ENCODE measurements at regions of chr12 and their contacts with region 1.

Region 1: DNA sequence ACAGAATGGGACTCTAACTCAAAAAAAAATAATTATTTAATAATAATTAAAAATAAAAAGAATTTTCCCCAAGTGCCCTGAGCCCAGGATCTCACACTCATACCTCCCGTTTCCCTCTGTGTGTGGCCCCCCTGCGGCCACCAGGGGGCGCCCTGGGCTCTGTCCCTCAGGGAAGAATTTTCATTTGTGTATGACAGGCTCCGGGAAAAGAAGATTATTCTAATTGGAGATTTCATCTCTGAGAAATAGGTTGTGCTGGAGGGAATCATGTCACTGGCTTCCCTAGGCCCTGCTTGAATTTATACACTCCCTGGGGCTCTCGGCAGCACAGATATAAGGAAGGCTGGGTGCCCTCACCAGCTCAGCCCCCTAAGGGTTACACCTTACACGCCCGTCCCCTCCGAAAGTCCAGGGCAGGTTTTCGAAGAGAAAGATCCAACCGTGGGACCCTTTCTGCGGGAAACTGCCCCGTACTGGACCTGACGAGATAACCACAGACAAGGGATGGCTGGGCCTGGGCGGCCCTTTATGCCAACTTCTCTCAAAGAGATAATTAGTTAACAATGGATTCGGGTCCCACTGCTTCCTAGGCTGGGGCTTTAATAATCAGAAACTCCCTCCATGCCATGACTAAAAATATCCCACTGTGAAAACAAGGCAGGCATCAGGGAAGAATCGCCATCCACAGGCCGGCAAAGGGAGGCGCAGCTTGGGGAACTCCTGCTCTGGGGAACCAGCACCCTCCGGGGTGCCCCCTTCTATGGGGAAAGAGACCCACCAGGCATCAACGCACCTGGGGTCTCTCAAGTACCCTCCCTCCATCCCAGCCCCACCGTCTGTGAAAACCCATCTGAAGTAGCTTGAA is 80.7 kb downstream of the KDM2B start:
- DNase-seq: peak; percentile 74
- ATAC-seq: peak; percentile 80
- H3K4me3 Mint-ChIP-seq: no peak overlapping the region
- H3K27ac Mint-ChIP-seq: no peak overlapping the region
- H3K4me1 Mint-ChIP-seq: peaks cover 25% of the 10 kb centered on the region
- H3K27me3 Mint-ChIP-seq: no peaks in the 10 kb centered on the region

Region 2: GRCh38 chr12:121399391-121400331 is 100.5 kb before region 1 on chr12 and contains the start of gene RNF34:
- CTCF ChIA-PET with region 1: no interaction called
- DNase-seq: peak; percentile 99
- ATAC-seq: peak; percentile 93
- H3K4me3 Mint-ChIP-seq: peak within 1 kb of the TSS; percentile 89
- H3K27ac Mint-ChIP-seq: peak within 1 kb of the TSS; percentile 95
- H3K4me1 Mint-ChIP-seq: peaks cover 36% of the 10 kb centered on the region
- H3K27me3 Mint-ChIP-seq: no peaks in the 10 kb centered on the region
- total RNA-seq, gene RNF34: 96.1 to 102 TPM

Region 3: DNA sequence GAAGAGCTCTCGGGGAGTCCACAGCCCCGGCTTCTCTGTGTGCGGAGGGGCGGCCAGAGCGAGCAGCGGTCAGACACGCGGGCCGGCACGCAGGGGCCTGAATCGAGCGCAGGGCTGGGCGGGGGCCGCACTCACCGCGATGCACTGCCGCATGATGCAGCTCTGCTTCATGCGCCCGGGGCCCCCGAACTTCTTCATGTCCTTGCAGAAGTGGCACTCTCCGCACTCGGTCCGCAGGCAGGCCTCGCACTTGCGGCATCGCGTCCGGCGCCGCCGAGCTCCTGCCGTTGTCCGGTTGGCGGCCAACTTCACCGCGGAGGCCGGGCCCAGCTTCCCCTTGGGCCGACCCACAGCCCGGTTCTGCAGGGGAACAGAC is 47.2 kb before region 1 on chr12:
- CTCF ChIA-PET with region 1: no interaction called
- DNase-seq: no peak
- ATAC-seq: no peak
- H3K4me3 Mint-ChIP-seq: no peak overlapping the region
- H3K27ac Mint-ChIP-seq: no peak overlapping the region
- H3K4me1 Mint-ChIP-seq: peaks cover 22% of the 10 kb centered on the region
- H3K27me3 Mint-ChIP-seq: no peaks in the 10 kb centered on the region

Region 4: GRCh38 chr12:121483949-121484348 is 16.2 kb before region 1 on chr12:
- CTCF ChIA-PET with region 1: interaction called, 100 read pairs
- DNase-seq: no peak
- ATAC-seq: no peak
- H3K4me3 Mint-ChIP-seq: no peak overlapping the region
- H3K27ac Mint-ChIP-seq: no peak overlapping the region
- H3K4me1 Mint-ChIP-seq: no peaks in the 10 kb centered on the region
- H3K27me3 Mint-ChIP-seq: no peaks in the 10 kb centered on the region

Region 5: DNA sequence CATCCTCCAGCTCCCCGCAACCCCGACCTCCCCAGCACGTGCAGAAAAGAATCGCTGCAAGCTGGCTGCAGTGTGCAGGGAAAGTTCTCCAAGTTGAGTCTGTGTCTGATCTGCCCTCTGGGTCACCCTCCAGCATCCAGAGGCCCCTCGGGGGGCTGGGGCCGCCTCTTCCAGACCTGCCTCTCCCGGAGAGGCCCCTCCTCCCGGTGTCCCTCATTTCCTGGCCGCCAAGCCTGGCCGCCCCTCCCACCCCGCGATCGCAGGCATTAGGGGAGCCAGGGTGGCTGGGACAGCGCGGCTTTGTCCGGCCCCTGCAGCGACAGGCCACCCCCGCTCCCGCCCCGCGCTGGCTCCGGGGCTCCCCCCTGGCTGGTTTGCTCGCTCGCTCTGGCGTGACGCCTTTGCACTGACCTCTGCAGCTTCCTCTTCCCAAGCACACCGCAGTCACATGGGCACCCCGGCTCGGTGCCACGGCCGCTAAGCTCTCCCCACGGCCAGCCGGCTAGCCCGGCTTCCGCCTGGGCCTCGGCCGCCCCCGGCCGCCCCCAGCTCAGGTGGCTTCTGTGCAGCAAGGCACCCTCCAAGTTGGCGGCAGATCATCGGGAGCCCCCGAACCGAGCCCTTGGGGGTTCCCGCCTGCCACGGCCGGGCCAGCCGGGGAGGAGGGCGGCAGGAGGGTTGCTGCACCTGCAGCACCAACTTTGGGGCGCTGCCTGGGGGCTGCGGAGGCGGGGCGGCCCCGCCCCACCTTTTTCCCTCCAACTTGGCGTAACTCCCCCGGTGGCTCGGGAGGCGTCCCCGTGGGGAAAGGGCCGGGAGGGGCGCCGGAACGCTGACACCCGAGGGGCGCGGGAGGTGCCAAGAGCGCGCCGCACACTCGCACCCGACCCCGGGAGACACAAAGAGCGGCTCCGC is 37.0 kb after region 1 on chr12:
- CTCF ChIA-PET with region 1: interaction called, 16 read pairs
- DNase-seq: peak; percentile 79
- ATAC-seq: peak; percentile 65
- H3K4me3 Mint-ChIP-seq: peak overlapping the region; percentile 71
- H3K27ac Mint-ChIP-seq: peak overlapping the region; percentile 67
- H3K4me1 Mint-ChIP-seq: peaks cover 53% of the 10 kb centered on the region
- H3K27me3 Mint-ChIP-seq: no peaks in the 10 kb centered on the region

Region 6: GRCh38 chr12:121595520-121595919 is 95.4 kb after region 1 on chr12:
- CTCF ChIA-PET with region 1: no interaction called
- DNase-seq: no peak
- ATAC-seq: no peak
- H3K4me3 Mint-ChIP-seq: no peak overlapping the region
- H3K27ac Mint-ChIP-seq: no peak overlapping the region
- H3K4me1 Mint-ChIP-seq: peaks cover 19% of the 10 kb centered on the region
- H3K27me3 Mint-ChIP-seq: no peaks in the 10 kb centered on the region

Region 7: GRCh38 chr12:121668750-121669520 is 168.8 kb after region 1 on chr12:
- CTCF ChIA-PET with region 1: interaction called, 10 read pairs
- DNase-seq: peak; percentile 68
- ATAC-seq: no peak
- H3K4me3 Mint-ChIP-seq: no peak overlapping the region
- H3K27ac Mint-ChIP-seq: no peak overlapping the region
- H3K4me1 Mint-ChIP-seq: peaks cover 51% of the 10 kb centered on the region
- H3K27me3 Mint-ChIP-seq: no peaks in the 10 kb centered on the region

Region 8: DNA sequence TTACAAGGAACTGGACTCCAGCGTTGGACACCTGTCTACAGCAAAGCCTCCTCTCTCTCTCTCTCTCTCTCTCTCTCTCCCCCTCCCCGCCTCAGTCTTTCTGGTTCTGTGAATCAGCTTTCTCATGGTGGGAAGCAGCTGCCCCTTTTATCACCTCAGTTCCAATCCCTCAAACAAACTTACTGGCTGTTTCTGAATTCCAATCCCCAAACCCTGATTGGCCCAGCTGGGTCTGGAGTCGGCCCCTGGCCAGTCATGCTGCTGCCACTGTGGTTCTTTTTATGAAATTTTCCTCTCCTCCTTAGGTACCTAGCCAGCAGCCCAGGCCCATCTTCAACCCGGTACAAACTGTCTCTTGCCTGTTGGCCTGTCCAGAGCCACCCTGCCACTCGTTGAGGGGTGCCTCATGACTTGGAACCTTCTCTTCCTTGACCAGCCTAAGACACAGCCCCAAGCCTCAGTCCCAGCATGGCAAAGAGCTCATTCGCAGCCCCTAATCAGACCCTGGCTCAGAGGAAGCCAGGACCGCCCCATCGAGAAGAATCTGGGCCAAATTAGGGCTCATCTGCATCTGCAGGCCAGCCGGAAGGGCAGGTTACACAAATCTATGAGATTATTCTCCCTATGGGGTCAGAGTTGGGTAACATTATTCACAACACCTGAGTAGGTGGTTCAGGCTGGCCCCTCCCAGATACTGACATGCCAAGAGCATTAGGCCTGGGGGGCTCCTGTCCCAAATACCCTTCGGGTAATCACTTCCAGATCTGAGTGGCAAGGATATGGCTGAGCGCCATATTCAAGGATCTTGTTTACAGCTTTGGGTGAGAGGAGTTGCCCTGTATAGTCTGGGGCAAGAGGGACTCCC is 178.8 kb after region 1 on chr12:
- CTCF ChIA-PET with region 1: interaction called, 19 read pairs
- DNase-seq: no peak
- ATAC-seq: no peak
- H3K4me3 Mint-ChIP-seq: no peak overlapping the region
- H3K27ac Mint-ChIP-seq: peak overlapping the region; percentile 18
- H3K4me1 Mint-ChIP-seq: peaks cover 5% of the 10 kb centered on the region
- H3K27me3 Mint-ChIP-seq: no peaks in the 10 kb centered on the region